ENCODE measurements at regions of chr1 and their contacts with region 1.

Region 1: GRCh38 chr1:46527474-46528296 is 23.8 kb downstream of the KNCN start:
- DNase-seq: peak; percentile 85
- H3K4me3 ChIP-seq: no peak overlapping the region
- H3K27ac ChIP-seq: peak overlapping the region in 2 of 4 donors; percentile 1 to 43
- H3K4me1 ChIP-seq: peaks cover 0 to 17% (median 3%) of the 10 kb centered on the region in 4 donors
- H3K27me3 ChIP-seq: peaks cover 46% of the 10 kb centered on the region
- CTCF ChIP-seq: peak; percentile 90 to 94 (median 93)
- EP300 ChIP-seq: no peak
- POLR2A ChIP-seq: no peak

Region 2: GRCh38 chr1:46406881-46407608 is 120.6 kb before region 1 on chr1:
- in situ Hi-C with region 1: no loop called
- intact Hi-C with region 1: loop called (anchors 5 kb)
- DNase-seq: no peak
- H3K4me3 ChIP-seq: peak overlapping the region in 2 of 4 donors; percentile 9 to 11
- H3K27ac ChIP-seq: no peak overlapping the region
- H3K4me1 ChIP-seq: peaks cover 3 to 16% (median 10%) of the 10 kb centered on the region in 4 donors
- H3K27me3 ChIP-seq: no peaks in the 10 kb centered on the region
- CTCF ChIP-seq: no peak
- EP300 ChIP-seq: no peak
- POLR2A ChIP-seq: no peak

Region 3: GRCh38 chr1:46442317-46443161 is 85.1 kb before region 1 on chr1:
- in situ Hi-C with region 1: loop called in 1 of 4 experiments (anchors 10 kb)
- intact Hi-C with region 1: loop called (anchors 1 kb)
- DNase-seq: peak; percentile 85
- H3K4me3 ChIP-seq: peak overlapping the region in 3 of 4 donors; percentile 16 to 40 (median 19)
- H3K27ac ChIP-seq: peak overlapping the region in 2 of 4 donors; percentile 31 to 52
- H3K4me1 ChIP-seq: peaks cover 0 to 10% (median 5%) of the 10 kb centered on the region in 4 donors
- H3K27me3 ChIP-seq: peaks cover 26% of the 10 kb centered on the region
- CTCF ChIP-seq: peak; percentile 85 to 94 (median 91)
- EP300 ChIP-seq: no peak
- POLR2A ChIP-seq: no peak

Region 4: GRCh38 chr1:46477153-46477929 is 50.3 kb before region 1 on chr1:
- in situ Hi-C with region 1: loop called in 3 of 4 experiments (anchors 5 to 10 kb)
- intact Hi-C with region 1: no loop called
- DNase-seq: peak; percentile 78
- H3K4me3 ChIP-seq: no peak overlapping the region
- H3K27ac ChIP-seq: no peak overlapping the region
- H3K4me1 ChIP-seq: no peaks in the 10 kb centered on the region
- H3K27me3 ChIP-seq: peaks cover 44% of the 10 kb centered on the region
- CTCF ChIP-seq: peak; percentile 88 to 92 (median 90)
- EP300 ChIP-seq: no peak
- POLR2A ChIP-seq: no peak

Region 5: GRCh38 chr1:46569884-46570725 is 42.4 kb after region 1 on chr1:
- in situ Hi-C with region 1: no loop called
- intact Hi-C with region 1: no loop called
- DNase-seq: no peak
- H3K4me3 ChIP-seq: no peak overlapping the region
- H3K27ac ChIP-seq: no peak overlapping the region
- H3K4me1 ChIP-seq: peaks cover 0 to 5% (median 0%) of the 10 kb centered on the region in 4 donors
- H3K27me3 ChIP-seq: no peaks in the 10 kb centered on the region
- CTCF ChIP-seq: no peak
- EP300 ChIP-seq: no peak
- POLR2A ChIP-seq: no peak